Activated CD8-positive, alpha-beta memory T cell treated with anti-CD3 and anti-CD28 coated beads, Interleukin-2, amount 10 ng/mL, durations not matched to agents 7 days and 5 days (primary cell): ENCODE measurements at regions of chr2 and their contacts with region 1.

Region 1: DNA sequence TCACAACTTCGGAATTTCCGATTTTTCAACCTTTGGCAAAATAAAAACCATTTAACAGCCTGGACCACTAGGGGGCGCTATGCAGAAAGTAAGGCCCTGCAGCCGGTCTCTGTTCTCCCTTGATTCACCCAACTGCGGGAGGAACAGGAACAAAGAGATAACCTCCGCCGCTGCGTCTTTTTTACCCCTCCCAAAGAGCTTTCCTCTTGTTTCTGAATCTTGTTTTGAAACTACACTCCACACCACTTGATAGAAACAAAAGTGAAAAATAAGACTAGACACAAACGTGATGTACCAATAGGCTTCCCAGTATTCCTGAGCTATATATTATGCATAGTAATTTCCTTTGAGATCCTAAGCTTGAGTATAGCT is 231.2 kb downstream of the MYO3B start:
- DNase-seq: peak; percentile 82
- ATAC-seq: peak; percentile 78
- H3K4me3 Mint-ChIP-seq: peak overlapping the region; percentile 47
- H3K27ac Mint-ChIP-seq: no peak overlapping the region
- H3K4me1 Mint-ChIP-seq: peaks cover 13% of the 10 kb centered on the region
- H3K27me3 Mint-ChIP-seq: peaks cover 9% of the 10 kb centered on the region

Region 2: GRCh38 chr2:169265591-169265990 is 1143.6 kb before region 1 on chr2:
- CTCF ChIA-PET with region 1: no interaction called
- DNase-seq: no peak
- ATAC-seq: no peak
- H3K4me3 Mint-ChIP-seq: no peak overlapping the region
- H3K27ac Mint-ChIP-seq: no peak overlapping the region
- H3K4me1 Mint-ChIP-seq: no peaks in the 10 kb centered on the region
- H3K27me3 Mint-ChIP-seq: peaks cover 16% of the 10 kb centered on the region

Region 3: GRCh38 chr2:170088776-170089175 is 320.4 kb before region 1 on chr2:
- CTCF ChIA-PET with region 1: no interaction called
- DNase-seq: no peak
- ATAC-seq: no peak
- H3K4me3 Mint-ChIP-seq: no peak overlapping the region
- H3K27ac Mint-ChIP-seq: no peak overlapping the region
- H3K4me1 Mint-ChIP-seq: no peaks in the 10 kb centered on the region
- H3K27me3 Mint-ChIP-seq: peaks cover 9% of the 10 kb centered on the region

Region 4: GRCh38 chr2:170177950-170178781 is 231.0 kb before region 1 on chr2 and contains the start of gene MYO3B:
- CTCF ChIA-PET with region 1: no interaction called
- DNase-seq: no peak
- ATAC-seq: peak; percentile 73
- H3K4me3 Mint-ChIP-seq: no peak within 1 kb of the TSS
- H3K27ac Mint-ChIP-seq: peak within 1 kb of the TSS; percentile 58
- H3K4me1 Mint-ChIP-seq: peaks cover 19% of the 10 kb centered on the region
- H3K27me3 Mint-ChIP-seq: no peaks in the 10 kb centered on the region
- total RNA-seq, gene MYO3B: 0.23 to 0.38 TPM

Region 5: DNA sequence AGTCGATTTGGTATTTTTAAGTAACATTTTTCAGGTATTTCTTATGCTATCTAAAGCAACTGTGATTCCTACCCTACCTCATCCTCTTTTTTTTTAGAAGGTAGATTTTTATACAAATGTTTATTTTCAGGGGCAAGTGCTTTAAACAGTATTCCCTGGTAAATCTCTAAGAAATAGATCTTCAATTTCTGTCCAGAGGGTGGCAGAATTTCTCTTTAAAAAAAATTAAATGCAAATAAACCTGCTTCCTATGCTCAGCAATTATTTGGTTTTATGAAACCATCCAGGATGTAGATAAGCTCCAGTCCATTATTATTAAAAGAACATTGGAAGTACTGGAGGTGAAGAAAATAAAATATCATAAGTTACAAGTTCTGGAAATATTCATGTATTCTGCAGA is 39.3 kb before region 1 on chr2:
- CTCF ChIA-PET with region 1: interaction called, 21 read pairs
- DNase-seq: no peak
- ATAC-seq: no peak
- H3K4me3 Mint-ChIP-seq: no peak overlapping the region
- H3K27ac Mint-ChIP-seq: no peak overlapping the region
- H3K4me1 Mint-ChIP-seq: peaks cover 44% of the 10 kb centered on the region
- H3K27me3 Mint-ChIP-seq: peaks cover 14% of the 10 kb centered on the region